Ascending aorta (tissue), 2 donors: ENCODE measurements at regions of chr1 and their contacts with region 1.

Region 1: GRCh38 chr1:68232354-68233148 is at the start of gene WLS:
- DNase-seq: peak; percentile 10 to 89
- H3K4me3 ChIP-seq: peak within 1 kb of the TSS; percentile 73 to 80
- H3K27ac ChIP-seq: peak within 1 kb of the TSS; percentile 78 to 89
- H3K4me1 ChIP-seq: peaks cover 0 to 13% of the 10 kb centered on the region in 2 donors
- H3K27me3 ChIP-seq: no peaks in the 10 kb centered on the region
- CTCF ChIP-seq: no peak
- total RNA-seq, gene WLS: 29.9 TPM

Region 2: GRCh38 chr1:67840449-67840848 is 392.1 kb before region 1 on chr1:
- intact Hi-C with region 1: loop called (anchors 5 kb)
- DNase-seq: no peak
- H3K4me3 ChIP-seq: no peak overlapping the region
- H3K27ac ChIP-seq: peak overlapping the region; percentile 80 to 93
- H3K4me1 ChIP-seq: peaks cover 6 to 43% of the 10 kb centered on the region in 2 donors
- H3K27me3 ChIP-seq: no peaks in the 10 kb centered on the region
- CTCF ChIP-seq: no peak

Region 3: GRCh38 chr1:68173911-68174737 is 58.4 kb before region 1 on chr1:
- intact Hi-C with region 1: loop called (anchors 1 kb)
- DNase-seq: peak in 1 of 2 donors; percentile 86
- H3K4me3 ChIP-seq: peak overlapping the region; percentile 23 to 28
- H3K27ac ChIP-seq: peak overlapping the region; percentile 58 to 66
- H3K4me1 ChIP-seq: peaks cover 5 to 47% of the 10 kb centered on the region in 2 donors
- H3K27me3 ChIP-seq: no peaks in the 10 kb centered on the region
- CTCF ChIP-seq: no peak

Region 4: DNA sequence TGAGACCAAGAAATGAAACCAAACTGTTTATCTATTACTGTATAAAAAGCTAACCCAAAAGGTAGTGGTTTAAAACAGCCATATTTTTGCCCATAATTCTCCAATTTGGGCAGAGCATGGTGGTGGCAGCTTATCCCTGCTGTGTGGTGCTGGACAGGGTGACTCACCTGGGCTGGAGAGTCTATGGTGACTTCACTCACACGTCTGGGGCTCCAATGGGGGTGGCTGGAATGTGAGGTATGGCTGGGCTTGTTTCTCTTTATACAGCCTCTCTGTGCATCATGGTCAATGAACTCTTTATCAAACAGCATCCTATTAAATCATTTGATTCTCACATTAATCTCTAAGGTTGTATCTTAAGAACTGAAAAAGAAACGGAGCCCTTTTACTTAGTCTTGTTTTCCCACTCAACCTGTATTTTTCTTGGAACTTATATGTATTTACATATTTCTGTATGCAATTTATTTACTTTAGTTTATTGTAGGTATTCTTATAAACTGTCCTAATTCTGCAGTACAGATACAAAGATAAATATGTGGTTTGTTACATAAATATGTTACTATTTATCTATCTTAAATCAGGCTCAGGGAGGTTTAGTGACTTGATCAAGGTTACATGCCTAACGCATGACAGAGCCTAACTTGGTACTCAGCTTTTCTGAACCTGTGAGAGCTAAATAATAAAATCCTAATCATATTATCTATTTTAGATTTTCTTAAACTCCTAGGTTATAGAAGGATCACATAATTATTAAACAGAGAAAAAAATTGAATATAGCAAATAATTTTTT is 37.3 kb after region 1 on chr1:
- intact Hi-C with region 1: no loop called
- DNase-seq: no peak
- H3K4me3 ChIP-seq: no peak overlapping the region
- H3K27ac ChIP-seq: no peak overlapping the region
- H3K4me1 ChIP-seq: no peaks in the 10 kb centered on the region
- H3K27me3 ChIP-seq: no peaks in the 10 kb centered on the region
- CTCF ChIP-seq: no peak

Region 5: GRCh38 chr1:68321084-68321685 is 88.6 kb after region 1 on chr1:
- intact Hi-C with region 1: loop called (anchors 2 kb)
- DNase-seq: peak in 1 of 2 donors; percentile 79
- H3K4me3 ChIP-seq: no peak overlapping the region
- H3K27ac ChIP-seq: no peak overlapping the region
- H3K4me1 ChIP-seq: peaks cover 0 to 2% of the 10 kb centered on the region in 2 donors
- H3K27me3 ChIP-seq: no peaks in the 10 kb centered on the region
- CTCF ChIP-seq: peak; percentile 36 to 70 (median 51)

Region 6: GRCh38 chr1:70205434-70206118 is 1973.0 kb after region 1 on chr1 and contains the start of gene LRRC40:
- intact Hi-C with region 1: loop called (anchors 10 kb)
- DNase-seq: peak; percentile 88 to 97
- H3K4me3 ChIP-seq: peak within 1 kb of the TSS; percentile 72 to 82
- H3K27ac ChIP-seq: peak within 1 kb of the TSS; percentile 85 to 94
- H3K4me1 ChIP-seq: peaks cover 0 to 28% of the 10 kb centered on the region in 2 donors
- H3K27me3 ChIP-seq: no peaks in the 10 kb centered on the region
- CTCF ChIP-seq: no peak
- total RNA-seq, gene LRRC40: 10.6 TPM